ENCODE measurements at regions of chr4 and their contacts with region 1.

Region 1: DNA sequence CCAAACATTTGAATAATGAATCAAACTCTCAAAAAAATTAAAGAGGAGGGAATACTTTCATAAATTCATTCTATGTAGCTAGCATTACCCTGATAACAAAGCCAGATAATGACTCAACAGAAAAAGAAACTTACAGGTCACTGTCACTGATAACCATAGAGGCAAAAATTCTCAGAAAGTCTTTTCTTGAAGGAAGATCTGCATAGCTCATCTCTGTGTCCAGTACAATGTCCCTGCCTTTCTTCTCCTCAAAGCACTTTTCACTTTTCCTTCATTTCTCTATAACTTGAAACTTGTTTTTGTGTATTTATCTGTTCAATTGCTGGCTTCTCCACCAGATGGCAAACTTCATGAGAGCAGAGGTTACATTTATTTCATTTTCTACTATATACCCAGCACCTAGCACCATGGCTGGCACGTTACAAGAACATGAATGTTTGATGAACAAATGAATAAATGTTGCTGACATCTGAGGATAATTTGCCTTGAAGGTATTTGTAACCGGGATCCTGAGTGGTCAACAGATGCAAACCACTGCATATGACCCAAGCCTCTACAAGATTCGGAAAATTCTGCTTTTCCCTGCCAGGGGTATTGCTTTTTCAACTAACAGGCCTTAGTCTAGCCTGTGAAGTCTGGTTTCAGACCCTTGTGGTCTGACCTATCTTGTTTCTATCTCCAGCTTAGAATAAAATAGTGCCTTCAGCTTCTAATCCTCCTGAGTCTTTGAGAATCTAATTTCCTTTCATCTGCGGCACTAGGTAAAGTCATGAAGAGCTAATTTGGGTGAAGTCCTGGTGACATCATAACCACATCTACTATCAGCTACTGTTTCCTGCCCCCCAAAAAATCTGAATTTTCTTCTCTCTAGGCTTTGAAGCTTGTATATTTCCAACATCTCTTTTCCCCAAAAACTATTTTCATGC is 52.5 kb upstream of the ANTXR2 start:
- DNase-seq: peak; percentile 31
- H3K4me3 Mint-ChIP-seq: peak overlapping the region; percentile 28
- H3K27ac Mint-ChIP-seq: peak overlapping the region; percentile 70
- H3K4me1 Mint-ChIP-seq: peaks cover 49% of the 10 kb centered on the region
- H3K27me3 Mint-ChIP-seq: no peaks in the 10 kb centered on the region

Region 2: GRCh38 chr4:79917246-79917645 is 208.3 kb before region 1 on chr4:
- CTCF ChIA-PET with region 1: interaction called, 5 read pairs
- POLR2A ChIA-PET with region 1: no interaction called
- intact Hi-C with region 1: loop called (anchors 1 kb)
- DNase-seq: peak; percentile 65
- H3K4me3 Mint-ChIP-seq: no peak overlapping the region
- H3K27ac Mint-ChIP-seq: no peak overlapping the region
- H3K4me1 Mint-ChIP-seq: peaks cover 20% of the 10 kb centered on the region
- H3K27me3 Mint-ChIP-seq: no peaks in the 10 kb centered on the region

Region 3: DNA sequence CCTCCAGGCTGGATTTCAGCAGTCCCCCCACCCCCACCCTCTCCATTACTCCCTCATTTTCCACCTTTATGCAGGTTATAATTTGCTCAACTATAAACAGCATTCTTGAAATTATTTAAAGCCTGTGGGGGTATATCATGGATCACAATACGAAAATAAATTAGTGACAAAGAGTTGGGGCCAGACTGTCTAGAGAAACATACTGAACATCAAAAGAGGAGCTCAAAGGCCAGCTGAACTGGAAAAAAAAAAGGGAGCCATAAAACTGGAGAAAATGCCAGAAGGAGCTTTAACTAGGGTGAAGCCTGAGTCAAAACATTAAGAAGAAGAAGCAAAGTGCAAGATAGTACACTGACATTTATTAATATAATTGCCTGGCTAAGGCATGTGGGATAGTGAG is 190.2 kb before region 1 on chr4:
- CTCF ChIA-PET with region 1: no interaction called
- POLR2A ChIA-PET with region 1: no interaction called
- intact Hi-C with region 1: no loop called
- DNase-seq: no peak
- H3K4me3 Mint-ChIP-seq: no peak overlapping the region
- H3K27ac Mint-ChIP-seq: no peak overlapping the region
- H3K4me1 Mint-ChIP-seq: peaks cover 2% of the 10 kb centered on the region
- H3K27me3 Mint-ChIP-seq: no peaks in the 10 kb centered on the region

Region 4: GRCh38 chr4:80138551-80139538 is 13.3 kb after region 1 on chr4:
- CTCF ChIA-PET with region 1: interaction called, 32 read pairs
- POLR2A ChIA-PET with region 1: no interaction called
- intact Hi-C with region 1: loop called (anchors 1 kb)
- DNase-seq: peak; percentile 77
- H3K4me3 Mint-ChIP-seq: no peak overlapping the region
- H3K27ac Mint-ChIP-seq: peak overlapping the region; percentile 64
- H3K4me1 Mint-ChIP-seq: peaks cover 57% of the 10 kb centered on the region
- H3K27me3 Mint-ChIP-seq: no peaks in the 10 kb centered on the region

Region 5: GRCh38 chr4:80173401-80173800 is 47.9 kb after region 1 on chr4:
- CTCF ChIA-PET with region 1: interaction called, 30 read pairs
- POLR2A ChIA-PET with region 1: interaction called, 19 read pairs
- intact Hi-C with region 1: loop called (anchors 1 kb)
- DNase-seq: peak; percentile 71
- H3K4me3 Mint-ChIP-seq: peak overlapping the region; percentile 18
- H3K27ac Mint-ChIP-seq: peak overlapping the region; percentile 81
- H3K4me1 Mint-ChIP-seq: peaks cover 55% of the 10 kb centered on the region
- H3K27me3 Mint-ChIP-seq: no peaks in the 10 kb centered on the region

Region 6: DNA sequence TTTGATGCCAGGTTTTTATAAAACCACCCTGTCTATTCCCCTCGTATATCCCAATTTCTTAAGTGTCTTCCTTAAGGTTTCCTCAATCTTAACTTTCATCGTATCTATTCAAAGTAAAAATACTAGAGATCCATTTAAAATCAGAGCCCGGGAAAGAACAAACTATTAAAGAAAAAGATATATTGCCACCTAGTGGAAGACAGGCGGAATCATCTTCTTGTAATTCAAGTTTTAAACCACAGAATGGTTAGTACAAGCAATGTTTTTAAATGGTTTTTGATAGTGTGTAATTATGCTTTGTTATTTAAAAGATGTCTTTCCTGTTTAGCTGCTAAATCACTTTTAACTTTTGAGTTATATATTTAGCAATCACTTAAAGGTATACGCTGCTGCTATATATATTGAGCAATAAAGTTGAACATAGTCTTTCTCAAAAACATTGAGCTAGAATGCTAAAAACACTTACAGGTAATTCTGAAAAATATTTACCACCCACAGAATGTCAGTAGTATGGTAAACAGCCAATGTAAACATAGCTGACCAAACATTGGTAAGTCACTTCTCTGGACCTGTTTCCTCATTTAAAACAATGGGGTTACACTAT is 90.0 kb after region 1 on chr4:
- CTCF ChIA-PET with region 1: interaction called, 12 read pairs
- POLR2A ChIA-PET with region 1: no interaction called
- intact Hi-C with region 1: loop called (anchors 1 kb)
- DNase-seq: no peak
- H3K4me3 Mint-ChIP-seq: no peak overlapping the region
- H3K27ac Mint-ChIP-seq: no peak overlapping the region
- H3K4me1 Mint-ChIP-seq: peaks cover 2% of the 10 kb centered on the region
- H3K27me3 Mint-ChIP-seq: peaks cover 10% of the 10 kb centered on the region

Region 7: GRCh38 chr4:80393246-80393969 is 267.9 kb after region 1 on chr4:
- CTCF ChIA-PET with region 1: no interaction called
- POLR2A ChIA-PET with region 1: no interaction called
- intact Hi-C with region 1: no loop called
- DNase-seq: peak; percentile 29
- H3K4me3 Mint-ChIP-seq: no peak overlapping the region
- H3K27ac Mint-ChIP-seq: no peak overlapping the region
- H3K4me1 Mint-ChIP-seq: peaks cover 8% of the 10 kb centered on the region
- H3K27me3 Mint-ChIP-seq: no peaks in the 10 kb centered on the region

Measured in activated CD4-positive, alpha-beta memory T cell treated with anti-CD3 and anti-CD28 coated beads for 36 hours (primary cell).